Activated CD4-positive, alpha-beta T cell treated with anti-CD3 and anti-CD28 coated beads for 36 hours (primary cell): ENCODE measurements at regions of chr2 and their contacts with region 1.

Region 1: GRCh38 chr2:230712443-230713330 is at the start of gene CAB39:
- DNase-seq: peak; percentile 93
- ATAC-seq: peak; percentile 83
- H3K4me3 Mint-ChIP-seq: peak within 1 kb of the TSS; percentile 94
- H3K27ac Mint-ChIP-seq: peak within 1 kb of the TSS; percentile 95
- H3K4me1 Mint-ChIP-seq: peaks cover 38% of the 10 kb centered on the region
- H3K27me3 Mint-ChIP-seq: no peaks in the 10 kb centered on the region
- total RNA-seq, gene CAB39: 122 to 148 TPM

Region 2: DNA sequence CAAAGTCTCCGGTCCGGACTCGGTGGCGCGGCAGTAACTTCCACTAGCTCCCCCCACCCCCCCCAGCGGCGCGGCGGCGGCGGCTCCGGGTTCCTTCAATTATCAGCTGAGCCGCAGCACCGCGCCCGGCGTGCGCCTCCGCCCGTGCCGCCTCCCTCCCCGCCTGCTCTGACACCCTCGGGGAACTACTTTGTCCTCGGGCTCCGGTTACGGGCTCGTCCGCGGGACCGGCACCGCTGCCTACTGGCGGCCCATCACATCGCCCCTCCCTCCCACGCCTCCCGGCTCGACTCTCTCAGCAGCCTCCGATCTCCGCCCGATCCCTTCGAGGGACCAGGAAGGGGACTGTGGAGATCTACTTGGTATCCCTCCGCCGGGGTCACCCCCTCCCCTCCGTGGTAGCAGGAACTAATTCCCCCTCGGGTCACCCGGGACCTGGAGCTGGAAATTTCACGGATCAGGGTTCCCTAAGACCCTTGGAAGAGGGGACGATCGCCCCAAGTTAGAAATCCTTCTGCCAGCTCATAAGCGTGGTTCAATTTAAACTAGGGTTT is 790.7 kb before region 1 on chr2 and contains the start of gene TRIP12:
- CTCF ChIA-PET with region 1: no interaction called
- POLR2A ChIA-PET with region 1: interaction called, 3 read pairs
- intact Hi-C with region 1: loop called in 1 of 2 experiments (anchors 2 kb)
- DNase-seq: peak; percentile 93
- ATAC-seq: peak; percentile 82
- H3K4me3 Mint-ChIP-seq: peak within 1 kb of the TSS; percentile 100
- H3K27ac Mint-ChIP-seq: peak within 1 kb of the TSS; percentile 99
- H3K4me1 Mint-ChIP-seq: peaks cover 35% of the 10 kb centered on the region
- H3K27me3 Mint-ChIP-seq: no peaks in the 10 kb centered on the region
- total RNA-seq, gene TRIP12: 231 to 382 TPM

Region 3: GRCh38 chr2:230075988-230076631 is 636.6 kb before region 1 on chr2:
- CTCF ChIA-PET with region 1: no interaction called
- POLR2A ChIA-PET with region 1: no interaction called
- intact Hi-C with region 1: no loop called
- DNase-seq: no peak
- ATAC-seq: peak; percentile 30
- H3K4me3 Mint-ChIP-seq: no peak overlapping the region
- H3K27ac Mint-ChIP-seq: no peak overlapping the region
- H3K4me1 Mint-ChIP-seq: no peaks in the 10 kb centered on the region
- H3K27me3 Mint-ChIP-seq: no peaks in the 10 kb centered on the region

Region 4: GRCh38 chr2:230219419-230220331 is 493.0 kb before region 1 on chr2 and contains the start of gene SP110:
- CTCF ChIA-PET with region 1: interaction called, 4 read pairs
- POLR2A ChIA-PET with region 1: interaction called, 3 read pairs
- intact Hi-C with region 1: loop called in 1 of 2 experiments (anchors 5 kb)
- DNase-seq: peak; percentile 89
- ATAC-seq: peak; percentile 91
- H3K4me3 Mint-ChIP-seq: peak within 1 kb of the TSS; percentile 88
- H3K27ac Mint-ChIP-seq: peak within 1 kb of the TSS; percentile 97
- H3K4me1 Mint-ChIP-seq: peaks cover 66% of the 10 kb centered on the region
- H3K27me3 Mint-ChIP-seq: no peaks in the 10 kb centered on the region
- total RNA-seq, gene SP110: 96.2 to 111 TPM

Region 5: DNA sequence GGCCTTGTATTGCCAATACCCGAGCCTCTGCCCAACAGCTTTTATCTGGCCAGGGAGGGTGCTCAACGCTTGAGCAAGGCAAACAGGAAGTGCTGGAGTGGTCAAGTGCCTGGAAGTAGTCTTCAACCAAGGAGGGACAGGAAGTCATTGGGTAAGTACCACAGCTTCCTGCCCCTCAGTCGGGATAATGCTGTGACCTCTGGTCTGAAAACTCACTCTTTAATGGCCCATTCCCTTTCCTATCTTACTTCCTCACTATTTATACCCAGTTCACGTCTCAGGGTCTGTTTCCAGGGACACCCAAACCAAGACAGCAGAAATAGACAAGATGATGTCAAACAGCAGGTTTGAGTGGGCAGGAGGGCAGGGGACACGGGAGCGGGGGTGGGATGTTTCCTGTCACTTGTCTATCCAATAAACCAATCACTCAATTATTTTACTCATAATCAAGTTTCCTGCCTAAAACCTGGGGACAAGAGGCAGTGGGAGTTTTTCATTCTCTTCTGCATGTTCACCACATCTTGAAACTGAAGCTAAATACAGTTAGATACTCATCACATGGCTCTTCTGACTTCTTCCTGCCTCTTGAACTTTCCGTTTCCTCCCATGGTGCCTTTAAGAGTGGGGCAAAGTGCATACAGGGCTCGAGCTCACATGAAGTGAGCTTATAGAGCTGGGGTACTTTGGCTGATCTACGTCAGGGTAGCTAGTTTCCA is 69.0 kb before region 1 on chr2:
- CTCF ChIA-PET with region 1: interaction called, 5 read pairs
- POLR2A ChIA-PET with region 1: interaction called, 4 read pairs
- intact Hi-C with region 1: loop called in 1 of 2 experiments (anchors 1 kb)
- DNase-seq: peak; percentile 84
- ATAC-seq: peak; percentile 94
- H3K4me3 Mint-ChIP-seq: peak overlapping the region; percentile 24
- H3K27ac Mint-ChIP-seq: peak overlapping the region; percentile 97
- H3K4me1 Mint-ChIP-seq: peaks cover 39% of the 10 kb centered on the region
- H3K27me3 Mint-ChIP-seq: no peaks in the 10 kb centered on the region

Region 6: DNA sequence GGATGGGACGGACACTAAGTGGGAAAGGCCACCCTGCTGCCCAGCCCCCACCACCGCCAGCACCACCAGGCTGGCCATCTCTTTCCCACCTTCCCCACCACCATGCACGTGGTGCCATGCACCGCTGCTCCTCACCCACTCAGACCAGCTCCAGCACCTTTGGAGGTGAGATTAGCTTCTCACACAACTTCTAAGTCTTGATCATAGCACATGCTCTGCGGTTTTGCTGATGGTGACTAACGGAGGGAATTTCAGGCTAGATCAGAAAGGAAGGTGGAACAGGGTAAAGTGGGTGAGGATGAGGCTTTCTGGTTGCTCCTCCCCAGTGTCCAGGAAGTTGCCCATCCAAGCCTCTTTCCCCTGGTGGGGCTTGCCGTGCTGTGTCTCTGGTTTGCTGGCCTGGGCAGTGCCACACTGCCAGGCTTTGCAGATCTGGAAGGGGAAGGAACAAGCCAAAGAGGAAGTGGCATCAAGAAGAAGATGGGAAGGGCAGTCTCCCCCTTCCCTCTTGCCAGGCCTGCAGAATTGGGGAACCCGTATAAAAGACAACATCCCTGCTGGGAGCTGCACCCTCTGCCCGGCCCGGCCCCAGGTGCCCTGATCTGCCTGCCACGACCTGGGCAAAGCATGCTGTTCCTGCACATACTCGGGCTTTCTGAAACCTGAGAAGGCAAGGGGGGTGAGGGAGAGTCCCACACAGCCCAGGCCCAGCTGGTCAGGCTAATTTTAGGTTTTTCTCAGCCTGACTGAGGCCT is 44.3 kb before region 1 on chr2:
- CTCF ChIA-PET with region 1: interaction called, 6 read pairs
- POLR2A ChIA-PET with region 1: interaction called, 3 read pairs
- intact Hi-C with region 1: loop called in 1 of 2 experiments (anchors 2 kb)
- DNase-seq: peak; percentile 68
- ATAC-seq: peak; percentile 55
- H3K4me3 Mint-ChIP-seq: peak overlapping the region; percentile 19
- H3K27ac Mint-ChIP-seq: peak overlapping the region; percentile 94
- H3K4me1 Mint-ChIP-seq: peaks cover 72% of the 10 kb centered on the region
- H3K27me3 Mint-ChIP-seq: no peaks in the 10 kb centered on the region

Region 7: DNA sequence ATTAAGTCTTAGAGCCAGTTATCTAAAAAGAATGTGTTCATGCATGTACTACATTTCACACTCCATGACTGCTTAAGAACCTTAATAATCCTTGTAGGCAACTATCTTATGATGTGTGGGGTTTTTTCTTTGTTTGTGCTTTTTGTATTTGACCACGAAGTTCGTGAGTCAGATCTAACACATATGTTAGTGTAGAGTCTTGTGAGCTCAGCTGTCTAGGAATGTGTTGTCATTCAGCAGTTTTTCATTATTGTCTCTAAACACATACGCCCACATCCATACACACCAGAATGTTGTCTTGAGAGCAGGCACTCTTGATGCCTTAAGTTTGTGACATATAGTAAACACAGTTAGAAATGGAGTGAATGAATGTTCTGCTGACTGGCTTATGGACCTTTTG is 38.4 kb after region 1 on chr2:
- CTCF ChIA-PET with region 1: no interaction called
- POLR2A ChIA-PET with region 1: no interaction called
- intact Hi-C with region 1: loop called (anchors 2 to 5 kb)
- DNase-seq: no peak
- ATAC-seq: peak; percentile 84
- H3K4me3 Mint-ChIP-seq: no peak overlapping the region
- H3K27ac Mint-ChIP-seq: no peak overlapping the region
- H3K4me1 Mint-ChIP-seq: peaks cover 75% of the 10 kb centered on the region
- H3K27me3 Mint-ChIP-seq: no peaks in the 10 kb centered on the region

Region 8: GRCh38 chr2:230793572-230794359 is 81.1 kb after region 1 on chr2:
- CTCF ChIA-PET with region 1: interaction called, 36 read pairs
- POLR2A ChIA-PET with region 1: interaction called, 12 read pairs
- intact Hi-C with region 1: loop called (anchors 1 kb)
- DNase-seq: peak; percentile 83
- ATAC-seq: peak; percentile 92
- H3K4me3 Mint-ChIP-seq: peak overlapping the region; percentile 66
- H3K27ac Mint-ChIP-seq: no peak overlapping the region
- H3K4me1 Mint-ChIP-seq: peaks cover 59% of the 10 kb centered on the region
- H3K27me3 Mint-ChIP-seq: no peaks in the 10 kb centered on the region